GM18951 (cell line): ENCODE measurements at regions of chr14 and their contacts with region 1.

Region 1: GRCh38 chr14:100709289-100710284 is 17.1 kb upstream of the DLK1 start:
- POLR2A ChIP-seq: no peak

Region 2: DNA sequence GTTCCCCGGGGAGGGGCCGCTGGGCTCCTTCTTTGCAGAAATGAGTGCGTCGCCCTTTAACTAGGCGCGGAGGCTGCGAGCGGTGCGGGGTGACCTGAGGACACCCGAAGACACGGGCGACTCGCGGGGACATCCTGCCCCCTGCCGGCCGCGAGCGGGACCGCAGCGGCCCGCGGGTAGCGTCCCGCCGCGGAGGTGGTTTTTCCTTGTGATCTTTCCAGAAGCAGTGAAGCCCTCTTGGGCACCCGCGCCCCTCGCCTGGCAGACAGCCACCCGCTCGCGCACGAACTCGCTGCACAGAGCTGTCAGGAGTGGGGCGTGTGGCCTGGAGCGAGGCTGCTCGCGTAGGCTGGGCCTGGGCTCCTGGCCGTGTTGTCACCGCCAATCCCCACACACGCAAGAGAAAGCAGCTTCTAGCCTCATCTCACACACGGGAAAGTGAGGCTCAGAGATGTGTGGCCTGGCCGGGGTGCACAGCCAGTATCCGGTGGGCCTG is 918.9 kb after region 1 on chr14:
- in situ Hi-C with region 1: loop called (anchors 25 kb)
- POLR2A ChIP-seq: no peak